B cell (primary cell): ENCODE measurements at regions of chr10 and their contacts with region 1.

Region 1: DNA sequence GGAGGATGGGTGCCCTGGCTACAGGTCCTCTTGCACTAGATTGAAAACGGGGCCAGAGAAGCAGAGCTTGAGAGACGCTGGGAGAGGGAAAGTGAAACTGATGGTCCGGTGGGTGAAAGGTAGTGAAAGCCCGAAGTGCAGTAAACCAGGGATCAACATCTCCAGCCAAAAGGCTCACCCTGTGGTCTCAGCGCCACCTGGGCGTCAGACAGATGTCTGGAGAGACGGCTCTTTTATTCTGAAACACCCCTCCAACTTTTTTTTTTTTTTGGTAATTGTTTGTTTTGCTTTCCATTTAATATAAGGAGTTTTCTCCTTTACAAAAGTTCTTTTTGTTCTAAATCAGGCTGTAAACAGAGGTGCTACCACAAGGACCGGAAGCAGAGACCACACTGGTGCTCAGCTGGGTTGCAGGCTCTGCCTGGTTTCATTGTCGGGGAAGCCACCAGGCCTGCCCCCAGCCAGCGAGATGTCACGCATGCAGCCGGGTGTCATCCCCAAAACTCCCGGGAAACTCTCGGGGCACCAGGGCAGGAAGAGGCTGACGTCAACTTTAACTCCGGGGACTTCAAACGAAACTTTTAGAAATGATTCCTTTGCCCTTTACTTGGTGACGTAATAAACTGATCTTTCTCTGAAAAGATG is 11.2 kb downstream of the IL2RA start:
- DNase-seq: peak; percentile 96
- ATAC-seq: peak; percentile 66
- H3K4me3 ChIP-seq: peak overlapping the region; percentile 35 to 63 (median 55)
- H3K4me3 Mint-ChIP-seq: peak overlapping the region; percentile 91
- H3K27ac ChIP-seq: peak overlapping the region; percentile 92
- H3K27ac Mint-ChIP-seq: peak overlapping the region; percentile 99
- H3K4me1 ChIP-seq: peaks cover 69 to 82% of the 10 kb centered on the region in 2 donors
- H3K4me1 Mint-ChIP-seq: peaks cover 87% of the 10 kb centered on the region
- H3K27me3 ChIP-seq: no peaks in the 10 kb centered on the region
- H3K27me3 Mint-ChIP-seq: no peaks in the 10 kb centered on the region
- CTCF ChIP-seq: peak; percentile 35

Region 2: DNA sequence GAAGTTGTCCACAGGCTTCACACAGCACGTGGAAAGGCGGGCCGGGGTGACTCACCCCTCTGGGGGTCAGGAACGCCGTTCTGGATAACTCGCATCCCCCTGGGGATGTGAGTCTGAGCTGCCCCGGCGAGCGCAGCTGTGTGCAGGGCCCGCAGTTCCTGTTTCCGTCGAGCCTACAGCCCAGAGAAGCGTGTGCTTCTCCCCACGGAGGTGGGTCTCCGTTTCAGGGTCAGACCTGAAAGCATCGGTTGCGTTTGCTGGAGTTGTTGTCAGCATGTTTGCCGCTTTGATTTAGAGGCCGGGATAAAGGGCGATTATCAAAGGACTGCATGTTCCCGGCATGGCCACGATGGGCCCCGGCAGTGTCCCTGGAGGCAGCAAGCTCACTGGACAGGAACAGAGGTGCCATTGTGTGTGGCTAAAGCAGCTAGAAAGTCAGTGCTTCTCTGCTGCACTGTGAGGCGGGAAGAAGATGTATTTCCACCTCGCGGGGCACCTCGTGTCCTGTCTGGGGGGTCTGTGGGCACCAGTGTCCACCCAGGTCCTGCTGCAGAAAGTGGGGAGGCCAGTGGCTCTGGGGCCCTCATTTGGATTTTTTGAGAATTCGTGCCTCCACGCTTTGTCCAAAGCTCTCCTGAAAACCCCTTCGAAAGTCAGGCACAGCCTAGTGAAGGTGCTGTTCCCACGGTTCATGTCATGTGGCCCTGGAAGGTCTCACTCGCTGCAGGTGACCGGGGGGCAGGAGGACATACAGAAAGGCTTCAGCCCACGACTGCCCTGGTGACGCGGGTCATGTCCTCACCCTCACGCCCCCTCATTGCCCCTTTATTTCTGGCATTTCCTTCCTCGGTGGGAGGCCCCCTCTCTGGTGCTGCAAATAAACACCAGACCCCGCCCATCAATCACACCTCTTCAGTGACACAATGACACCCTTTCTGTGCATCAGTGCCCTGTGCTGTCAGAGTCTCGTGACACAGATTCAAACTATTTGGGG is 210.3 kb before region 1 on chr10:
- CTCF ChIA-PET with region 1: no interaction called
- POLR2A ChIA-PET with region 1: interaction called, 3 read pairs
- intact Hi-C with region 1: loop called (anchors 2 kb)
- DNase-seq: peak; percentile 92
- ATAC-seq: peak; percentile 82
- H3K4me3 ChIP-seq: peak overlapping the region in 4 of 5 experiments; percentile 55 to 63 (median 58)
- H3K4me3 Mint-ChIP-seq: peak overlapping the region; percentile 94
- H3K27ac ChIP-seq: peak overlapping the region; percentile 99 to 100
- H3K27ac Mint-ChIP-seq: peak overlapping the region; percentile 100
- H3K4me1 ChIP-seq: peaks cover 68 to 77% of the 10 kb centered on the region in 2 donors
- H3K4me1 Mint-ChIP-seq: peaks cover 70% of the 10 kb centered on the region
- H3K27me3 ChIP-seq: no peaks in the 10 kb centered on the region
- H3K27me3 Mint-ChIP-seq: no peaks in the 10 kb centered on the region
- CTCF ChIP-seq: no peak

Region 3: GRCh38 chr10:5977471-5978229 is 73.3 kb before region 1 on chr10 and contains the start of gene IL15RA:
- CTCF ChIA-PET with region 1: interaction called, 7 read pairs
- POLR2A ChIA-PET with region 1: interaction called, 5 read pairs
- intact Hi-C with region 1: loop called (anchors 1 kb)
- DNase-seq: peak; percentile 88
- ATAC-seq: peak; percentile 77
- H3K4me3 ChIP-seq: peak within 1 kb of the TSS; percentile 74 to 96 (median 93)
- H3K4me3 Mint-ChIP-seq: peak within 1 kb of the TSS; percentile 90
- H3K27ac ChIP-seq: peak within 1 kb of the TSS; percentile 65 to 75
- H3K27ac Mint-ChIP-seq: peak within 1 kb of the TSS; percentile 95
- H3K4me1 ChIP-seq: peaks cover 8 to 27% of the 10 kb centered on the region in 2 donors
- H3K4me1 Mint-ChIP-seq: peaks cover 29% of the 10 kb centered on the region
- H3K27me3 ChIP-seq: peaks cover 0 to 3% (median 0%) of the 10 kb centered on the region in 4 experiments
- H3K27me3 Mint-ChIP-seq: no peaks in the 10 kb centered on the region
- CTCF ChIP-seq: peak; percentile 43
- total RNA-seq, gene IL15RA: 6.8 and 9.3 TPM in 2 replicates

Region 4: GRCh38 chr10:6062101-6062771 is 11.3 kb after region 1 on chr10 and contains the start of gene IL2RA:
- CTCF ChIA-PET with region 1: interaction called, 65 read pairs
- POLR2A ChIA-PET with region 1: interaction called, 9 read pairs
- intact Hi-C with region 1: loop called (anchors 1 kb)
- DNase-seq: peak; percentile 73
- ATAC-seq: peak; percentile 73
- H3K4me3 ChIP-seq: peak within 1 kb of the TSS in 4 of 5 experiments; percentile 51 to 62 (median 54)
- H3K4me3 Mint-ChIP-seq: peak within 1 kb of the TSS; percentile 97
- H3K27ac ChIP-seq: peak within 1 kb of the TSS; percentile 62 to 77
- H3K27ac Mint-ChIP-seq: peak within 1 kb of the TSS; percentile 97
- H3K4me1 ChIP-seq: peaks cover 30 to 45% of the 10 kb centered on the region in 2 donors
- H3K4me1 Mint-ChIP-seq: peaks cover 69% of the 10 kb centered on the region
- H3K27me3 ChIP-seq: no peaks in the 10 kb centered on the region
- H3K27me3 Mint-ChIP-seq: no peaks in the 10 kb centered on the region
- CTCF ChIP-seq: no peak
- total RNA-seq, gene IL2RA: 52.7 and 56.7 TPM in 2 replicates

Region 5: DNA sequence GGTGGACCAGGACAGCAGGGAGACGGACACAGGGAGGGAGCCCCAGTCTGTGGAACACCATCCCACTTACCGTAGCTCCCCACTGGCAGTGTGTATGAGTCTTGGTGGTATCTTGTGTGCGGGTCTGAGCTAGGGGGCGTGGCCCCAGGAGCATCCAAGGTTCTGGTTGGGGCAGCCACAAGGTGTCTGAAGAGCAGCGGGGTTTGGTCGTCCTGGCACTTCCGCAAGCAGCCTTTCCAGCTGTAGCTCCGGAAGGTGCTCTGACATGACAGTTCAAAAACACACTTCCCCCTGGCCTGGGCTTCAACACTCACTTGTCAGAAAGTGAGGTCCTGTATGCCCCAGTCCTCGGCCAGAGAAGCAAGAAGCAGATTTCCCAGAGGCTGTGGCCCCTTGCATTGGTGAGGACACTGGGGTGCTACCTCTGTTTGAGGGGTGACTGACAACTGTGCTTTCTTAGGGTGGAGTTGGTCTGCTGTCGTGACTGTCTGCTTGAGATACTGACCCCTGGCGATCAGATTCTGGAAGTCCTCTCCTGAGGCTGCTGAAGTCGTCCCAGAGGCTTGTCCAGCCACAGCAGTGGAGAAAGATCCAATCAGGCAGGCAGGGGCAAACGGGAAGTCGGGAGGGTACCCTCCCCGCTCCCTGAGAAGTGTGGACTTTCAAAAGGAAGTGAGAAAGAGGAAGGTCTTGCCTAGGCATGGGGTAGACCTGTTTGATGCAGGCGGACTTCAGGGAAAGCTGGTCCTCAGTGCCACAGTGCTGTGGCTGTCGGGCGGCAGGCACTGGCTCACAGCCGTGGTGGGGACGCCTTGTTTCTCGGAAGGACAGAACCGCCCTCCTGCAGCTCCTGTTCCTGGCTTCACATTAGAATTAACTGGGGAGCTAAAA is 100.4 kb after region 1 on chr10:
- CTCF ChIA-PET with region 1: no interaction called
- POLR2A ChIA-PET with region 1: no interaction called
- intact Hi-C with region 1: loop called (anchors 5 kb)
- DNase-seq: peak; percentile 84
- ATAC-seq: peak; percentile 84
- H3K4me3 ChIP-seq: peak overlapping the region; percentile 6 to 58 (median 26)
- H3K4me3 Mint-ChIP-seq: peak overlapping the region; percentile 85
- H3K27ac ChIP-seq: peak overlapping the region; percentile 40 to 78
- H3K27ac Mint-ChIP-seq: peak overlapping the region; percentile 87
- H3K4me1 ChIP-seq: peaks cover 24 to 34% of the 10 kb centered on the region in 2 donors
- H3K4me1 Mint-ChIP-seq: peaks cover 53% of the 10 kb centered on the region
- H3K27me3 ChIP-seq: no peaks in the 10 kb centered on the region
- H3K27me3 Mint-ChIP-seq: no peaks in the 10 kb centered on the region
- CTCF ChIP-seq: peak; percentile 71